HepG2 (cell line): ENCODE measurements at regions of chr4 and their contacts with region 1.

Region 1: GRCh38 chr4:106463622-106464021 is 95.0 kb upstream of the GIMD1 start:
- DNase-seq: no peak
- ATAC-seq: no peak
- H3K4me3 ChIP-seq: no peak overlapping the region
- H3K27ac ChIP-seq: no peak overlapping the region
- H3K4me1 ChIP-seq: no peaks in the 10 kb centered on the region
- H3K27me3 ChIP-seq: no peaks in the 10 kb centered on the region
- CTCF ChIP-seq: no peak
- EP300 ChIP-seq: no peak
- POLR2A ChIP-seq: no peak
- RAD21 ChIP-seq: no peak

Region 2: GRCh38 chr4:105765690-105766407 is 697.8 kb before region 1 on chr4:
- CTCF ChIA-PET with region 1: no interaction called
- POLR2A ChIA-PET with region 1: no interaction called
- in situ Hi-C with region 1: no loop called
- intact Hi-C with region 1: loop called (anchors 10 kb)
- DNase-seq: peak; percentile 8
- ATAC-seq: no peak
- H3K4me3 ChIP-seq: no peak overlapping the region
- H3K27ac ChIP-seq: no peak overlapping the region
- H3K4me1 ChIP-seq: no peaks in the 10 kb centered on the region
- H3K27me3 ChIP-seq: no peaks in the 10 kb centered on the region
- CTCF ChIP-seq: no peak
- EP300 ChIP-seq: no peak
- POLR2A ChIP-seq: no peak
- RAD21 ChIP-seq: no peak